PC-9 (cell line): ENCODE measurements at regions of chr7 and their contacts with region 1.

Region 1: DNA sequence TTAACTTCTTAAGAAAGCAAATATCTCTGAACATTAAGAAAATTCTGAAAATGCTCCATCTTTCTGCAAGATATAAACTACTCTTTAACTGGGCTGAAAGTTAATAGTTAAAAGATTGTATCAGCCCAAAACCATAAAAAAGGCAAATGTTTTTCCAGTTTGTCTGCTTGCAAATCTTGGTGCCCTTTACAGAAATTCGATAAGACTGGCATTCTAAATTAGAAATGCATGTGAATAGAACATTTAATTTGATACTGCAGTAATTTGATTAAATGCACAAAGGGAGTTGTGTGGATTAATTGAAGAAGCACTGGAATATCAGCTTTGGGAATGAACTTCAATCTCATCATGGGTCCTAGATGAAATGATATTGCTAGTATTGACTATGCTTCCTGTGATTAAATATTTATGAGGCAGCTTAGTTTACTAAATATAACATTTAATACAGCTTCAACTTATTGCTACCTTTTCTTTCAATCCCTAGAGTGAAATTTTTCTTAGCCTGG is 78.4 kb downstream of the IQUB start:
- DNase-seq: no peak
- H3K4me3 ChIP-seq: no peak overlapping the region
- H3K27ac ChIP-seq: no peak overlapping the region
- H3K4me1 ChIP-seq: no peaks in the 10 kb centered on the region
- H3K27me3 ChIP-seq: no peaks in the 10 kb centered on the region
- CTCF ChIP-seq: no peak

Region 2: GRCh38 chr7:122544463-122544862 is 911.6 kb before region 1 on chr7:
- CTCF ChIA-PET with region 1: no interaction called
- POLR2A ChIA-PET with region 1: interaction called, 12 read pairs
- intact Hi-C with region 1: no loop called
- DNase-seq: no peak
- H3K4me3 ChIP-seq: no peak overlapping the region
- H3K27ac ChIP-seq: no peak overlapping the region
- H3K4me1 ChIP-seq: no peaks in the 10 kb centered on the region
- H3K27me3 ChIP-seq: no peaks in the 10 kb centered on the region
- CTCF ChIP-seq: no peak

Region 3: DNA sequence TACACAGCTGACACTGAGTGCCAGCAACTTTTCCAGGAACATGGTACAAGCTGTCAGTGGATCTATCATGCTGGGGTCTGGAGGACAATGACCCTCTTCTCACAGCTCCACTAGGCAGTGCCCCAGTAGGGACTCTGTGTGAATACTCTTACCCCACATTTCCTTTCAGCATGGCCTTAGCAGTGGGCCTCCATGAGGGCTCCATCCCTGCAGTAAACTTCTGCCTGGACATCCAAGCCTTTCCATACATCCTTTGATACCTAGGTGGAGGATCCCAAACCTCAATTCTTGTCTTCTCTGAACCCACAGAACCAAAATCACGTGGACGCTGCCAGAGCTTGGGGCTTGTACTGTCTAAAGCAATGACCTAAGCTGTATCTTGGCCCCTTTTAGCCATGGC is 38.4 kb before region 1 on chr7:
- CTCF ChIA-PET with region 1: no interaction called
- POLR2A ChIA-PET with region 1: no interaction called
- intact Hi-C with region 1: no loop called
- DNase-seq: no peak
- H3K4me3 ChIP-seq: no peak overlapping the region
- H3K27ac ChIP-seq: no peak overlapping the region
- H3K4me1 ChIP-seq: no peaks in the 10 kb centered on the region
- H3K27me3 ChIP-seq: no peaks in the 10 kb centered on the region
- CTCF ChIP-seq: no peak